Common myeloid progenitor, CD34-positive (primary cell): ENCODE measurements at regions of chr17 and their contacts with region 1.

Region 1: DNA sequence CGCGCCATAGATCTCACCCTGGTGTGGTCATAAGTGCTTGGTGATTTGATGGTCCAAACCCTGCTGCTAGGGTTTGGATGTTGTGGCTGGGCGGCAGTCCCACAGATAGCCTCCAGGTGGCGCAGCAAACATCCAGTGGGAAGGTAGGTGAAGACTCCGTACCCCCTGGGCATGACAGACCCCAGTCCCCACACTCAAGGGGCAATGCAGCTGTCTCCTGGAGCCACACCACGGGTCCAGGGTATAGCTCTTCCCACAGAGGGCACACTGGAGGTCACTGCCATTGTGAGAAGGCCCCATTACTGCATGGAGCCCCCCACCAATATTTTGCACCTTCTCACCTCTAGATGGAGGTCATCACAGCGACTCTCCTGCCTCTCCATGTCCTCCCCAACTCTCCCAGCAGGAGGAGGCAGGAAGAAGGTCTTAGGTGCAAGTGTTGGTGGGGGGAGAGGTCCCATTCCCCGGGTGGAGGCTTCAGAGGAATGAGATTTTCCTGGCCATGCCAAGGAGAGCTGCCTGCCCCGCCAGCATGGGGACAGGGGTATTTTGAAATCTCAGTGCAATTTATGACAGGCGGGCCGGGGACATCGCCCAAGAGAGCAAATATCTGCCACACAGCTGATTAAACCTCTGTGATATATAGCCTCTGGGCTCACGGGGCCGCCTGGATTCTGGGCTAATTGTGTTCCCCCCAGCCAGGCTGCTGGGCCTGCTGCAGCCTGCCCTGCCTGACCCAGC is 17.1 kb upstream of the C17orf113 start:
- DNase-seq: peak; percentile 59 to 69 (median 59)
- H3K4me3 ChIP-seq: no peak overlapping the region
- H3K27ac ChIP-seq: no peak overlapping the region
- H3K4me1 ChIP-seq: peaks cover 0 to 42% (median 37%) of the 10 kb centered on the region in 4 experiments
- H3K27me3 ChIP-seq: no peaks in the 10 kb centered on the region

Region 2: GRCh38 chr17:42019509-42020404 is 47.8 kb before region 1 on chr17 and contains the start of gene NKIRAS2:
- CTCF ChIA-PET with region 1: interaction called, 51 read pairs
- POLR2A ChIA-PET with region 1: no interaction called
- DNase-seq: peak; percentile 93 to 94 (median 93)
- H3K4me3 ChIP-seq: peak within 1 kb of the TSS; percentile 74 to 93 (median 92)
- H3K27ac ChIP-seq: peak within 1 kb of the TSS; percentile 76 to 93
- H3K4me1 ChIP-seq: peaks cover 25 to 52% (median 42%) of the 10 kb centered on the region in 4 experiments
- H3K27me3 ChIP-seq: no peaks in the 10 kb centered on the region

Region 3: GRCh38 chr17:42027961-42028790 is 39.3 kb before region 1 on chr17:
- CTCF ChIA-PET with region 1: interaction called, 51 read pairs
- POLR2A ChIA-PET with region 1: interaction called, 3 read pairs
- DNase-seq: no peak
- H3K4me3 ChIP-seq: no peak overlapping the region
- H3K27ac ChIP-seq: no peak overlapping the region
- H3K4me1 ChIP-seq: peaks cover 9 to 51% (median 44%) of the 10 kb centered on the region in 4 experiments
- H3K27me3 ChIP-seq: no peaks in the 10 kb centered on the region

Region 4: DNA sequence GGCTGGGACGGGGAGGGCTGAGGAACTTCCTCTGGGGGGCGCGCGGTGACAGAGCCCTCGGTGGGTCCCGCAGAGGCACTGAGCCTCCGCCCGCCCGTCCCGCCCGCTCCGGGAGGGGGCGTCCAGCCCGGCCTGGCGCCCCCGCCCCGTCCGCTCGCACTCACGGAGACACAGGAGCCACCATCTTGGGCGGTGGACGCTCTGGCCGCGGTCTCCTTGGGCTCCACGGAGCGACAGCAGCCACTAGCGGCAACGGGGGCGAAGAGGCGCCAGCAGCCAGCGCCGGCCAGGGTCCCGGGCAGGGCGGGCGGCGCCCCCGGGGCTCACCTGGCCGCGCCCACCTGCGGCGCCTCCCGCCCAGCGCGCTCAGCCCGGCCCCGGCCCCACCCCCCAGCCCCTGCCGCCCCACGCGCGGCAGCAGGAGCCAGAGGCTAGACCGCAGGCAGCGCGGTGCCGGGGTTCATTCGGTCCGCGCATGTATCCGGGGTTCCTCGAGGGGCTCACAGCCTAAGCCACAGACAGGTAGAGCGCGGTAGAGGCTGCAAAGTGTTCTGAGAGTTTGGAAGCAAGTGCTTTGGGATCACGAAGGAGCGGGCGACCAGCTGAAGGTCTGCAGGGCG is 17.0 kb before region 1 on chr17 and contains the start of gene C17orf113:
- CTCF ChIA-PET with region 1: interaction called, 19 read pairs
- POLR2A ChIA-PET with region 1: interaction called, 3 read pairs
- DNase-seq: peak; percentile 59 to 73 (median 62)
- H3K4me3 ChIP-seq: peak within 1 kb of the TSS; percentile 49 to 89 (median 70)
- H3K27ac ChIP-seq: peak within 1 kb of the TSS in 1 of 2 experiments; percentile 2
- H3K4me1 ChIP-seq: peaks cover 0 to 19% (median 7%) of the 10 kb centered on the region in 4 experiments
- H3K27me3 ChIP-seq: peaks cover 0 to 3% (median 0%) of the 10 kb centered on the region in 5 experiments

Region 5: GRCh38 chr17:42101513-42102319 is 34.2 kb after region 1 on chr17:
- CTCF ChIA-PET with region 1: interaction called, 41 read pairs
- POLR2A ChIA-PET with region 1: no interaction called
- DNase-seq: peak; percentile 58 to 66 (median 58)
- H3K4me3 ChIP-seq: no peak overlapping the region
- H3K27ac ChIP-seq: no peak overlapping the region
- H3K4me1 ChIP-seq: peaks cover 0 to 18% (median 10%) of the 10 kb centered on the region in 4 experiments
- H3K27me3 ChIP-seq: peaks cover 0 to 14% (median 9%) of the 10 kb centered on the region in 5 experiments

Region 6: GRCh38 chr17:42112552-42113176 is 45.1 kb after region 1 on chr17 and contains the start of gene DHX58:
- CTCF ChIA-PET with region 1: interaction called, 90 read pairs
- POLR2A ChIA-PET with region 1: interaction called, 4 read pairs
- DNase-seq: peak; percentile 87 to 93 (median 93)
- H3K4me3 ChIP-seq: peak within 1 kb of the TSS; percentile 30 to 87 (median 68)
- H3K27ac ChIP-seq: peak within 1 kb of the TSS; percentile 50 to 88
- H3K4me1 ChIP-seq: peaks cover 6 to 29% (median 25%) of the 10 kb centered on the region in 4 experiments
- H3K27me3 ChIP-seq: no peaks in the 10 kb centered on the region

Region 7: GRCh38 chr17:42120770-42121769 is 53.5 kb after region 1 on chr17 and contains the start of gene KAT2A:
- CTCF ChIA-PET with region 1: interaction called, 90 read pairs
- POLR2A ChIA-PET with region 1: no interaction called
- DNase-seq: peak; percentile 56 to 77 (median 69)
- H3K4me3 ChIP-seq: peak within 1 kb of the TSS; percentile 8 to 72 (median 57)
- H3K27ac ChIP-seq: peak within 1 kb of the TSS in 1 of 2 experiments; percentile 54
- H3K4me1 ChIP-seq: peaks cover 0 to 15% (median 13%) of the 10 kb centered on the region in 4 experiments
- H3K27me3 ChIP-seq: no peaks in the 10 kb centered on the region

Region 8: DNA sequence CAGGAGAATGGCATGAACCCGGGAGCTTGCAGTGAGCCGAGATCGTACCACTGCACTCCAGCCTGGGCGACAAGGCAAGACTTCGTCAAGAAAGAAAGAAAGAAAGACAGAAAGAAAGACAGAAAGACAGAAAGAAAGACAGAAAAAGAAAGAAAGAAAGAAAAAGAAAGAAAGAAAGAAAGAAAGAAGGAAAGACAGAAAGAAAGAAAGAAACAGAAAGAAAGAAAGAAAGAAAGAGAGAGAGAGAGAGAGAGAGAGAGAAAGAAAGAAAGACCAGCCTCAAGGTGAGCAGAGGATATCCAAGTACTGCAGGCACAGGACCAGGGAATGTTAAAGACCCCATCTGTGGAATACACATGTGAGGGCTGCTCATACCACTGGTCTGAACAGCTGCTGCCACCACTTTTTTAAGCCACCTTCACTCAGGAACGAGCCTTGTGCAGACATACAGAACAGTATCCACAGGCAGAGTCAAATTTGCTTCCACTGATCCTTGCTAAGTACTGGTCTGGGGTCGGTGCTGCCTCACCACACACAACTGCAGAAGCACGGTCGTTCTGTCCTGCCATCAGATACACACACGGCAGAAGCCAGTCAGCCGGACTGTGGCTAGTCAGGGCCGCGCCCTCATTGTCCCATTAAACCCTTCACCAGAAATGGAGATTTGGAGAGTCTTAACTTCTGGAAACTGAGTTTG is 79.5 kb after region 1 on chr17:
- CTCF ChIA-PET with region 1: no interaction called
- POLR2A ChIA-PET with region 1: no interaction called
- DNase-seq: no peak
- H3K4me3 ChIP-seq: no peak overlapping the region
- H3K27ac ChIP-seq: no peak overlapping the region
- H3K4me1 ChIP-seq: peaks cover 0 to 1% (median 0%) of the 10 kb centered on the region in 4 experiments
- H3K27me3 ChIP-seq: no peaks in the 10 kb centered on the region